Left lung (tissue), 14 donors: ENCODE measurements at regions of chr4 and their contacts with region 1.

Region 1: DNA sequence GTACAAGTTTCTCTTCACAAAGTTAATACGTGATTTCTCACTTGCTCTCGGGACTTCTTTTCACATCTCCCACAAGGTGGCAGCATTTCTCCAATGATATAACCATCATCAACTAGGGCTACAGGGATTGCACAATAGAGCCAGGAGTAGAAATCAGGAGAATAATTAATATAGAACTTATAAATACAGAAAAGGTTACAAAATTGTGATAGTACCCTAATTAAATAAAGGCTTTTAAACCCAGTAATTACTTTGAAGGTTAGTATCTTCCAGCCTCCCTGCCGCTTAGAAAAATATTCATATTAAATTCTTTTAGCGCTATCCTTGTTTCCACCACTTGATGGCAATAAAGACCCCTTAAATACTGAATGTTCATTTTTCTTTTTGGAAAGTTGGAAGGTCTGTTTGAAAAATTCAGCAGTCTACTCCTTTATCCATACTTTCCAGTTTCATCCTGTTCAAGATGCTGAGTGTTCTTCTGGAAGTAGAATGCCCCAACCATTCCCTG is 65.8 kb downstream of the RASGEF1B start:
- DNase-seq: peak in 2 of 4 donors; percentile 81 to 88
- ATAC-seq: peak; percentile 96
- H3K4me3 ChIP-seq: peak overlapping the region in 1 of 2 donors; percentile 8
- H3K27ac ChIP-seq: no peak overlapping the region
- H3K4me1 ChIP-seq: peaks cover 0 to 2% of the 10 kb centered on the region in 2 donors
- H3K27me3 ChIP-seq: no peaks in the 10 kb centered on the region
- CTCF ChIP-seq: peak; percentile 71 to 82

Region 2: DNA sequence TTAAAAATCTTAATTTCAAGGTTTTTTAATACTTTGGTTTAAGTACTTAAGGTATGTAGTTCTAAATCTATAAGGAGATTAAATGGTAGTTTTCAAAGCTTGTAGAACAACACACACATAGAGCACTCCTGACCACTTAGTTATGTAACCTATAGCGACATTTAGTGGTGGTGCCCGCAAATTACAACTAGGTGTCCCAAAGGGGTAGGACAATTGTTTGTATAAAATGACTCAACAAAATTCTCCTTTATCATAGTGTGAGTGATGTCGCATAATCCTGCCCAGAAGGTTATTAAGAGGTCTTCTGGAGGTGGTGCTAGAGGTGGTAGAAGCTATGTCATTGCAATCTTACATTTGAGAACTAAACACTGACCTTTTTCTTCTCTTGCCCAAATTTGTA is 438.8 kb after region 1 on chr4:
- intact Hi-C with region 1: loop called in 1 of 2 experiments (anchors 5 kb)
- DNase-seq: peak in 3 of 4 donors; percentile 51 to 78 (median 62)
- ATAC-seq: peak; percentile 99
- H3K4me3 ChIP-seq: no peak overlapping the region
- H3K27ac ChIP-seq: no peak overlapping the region
- H3K4me1 ChIP-seq: no peaks in the 10 kb centered on the region
- H3K27me3 ChIP-seq: no peaks in the 10 kb centered on the region
- CTCF ChIP-seq: peak; percentile 72 to 81

Region 3: DNA sequence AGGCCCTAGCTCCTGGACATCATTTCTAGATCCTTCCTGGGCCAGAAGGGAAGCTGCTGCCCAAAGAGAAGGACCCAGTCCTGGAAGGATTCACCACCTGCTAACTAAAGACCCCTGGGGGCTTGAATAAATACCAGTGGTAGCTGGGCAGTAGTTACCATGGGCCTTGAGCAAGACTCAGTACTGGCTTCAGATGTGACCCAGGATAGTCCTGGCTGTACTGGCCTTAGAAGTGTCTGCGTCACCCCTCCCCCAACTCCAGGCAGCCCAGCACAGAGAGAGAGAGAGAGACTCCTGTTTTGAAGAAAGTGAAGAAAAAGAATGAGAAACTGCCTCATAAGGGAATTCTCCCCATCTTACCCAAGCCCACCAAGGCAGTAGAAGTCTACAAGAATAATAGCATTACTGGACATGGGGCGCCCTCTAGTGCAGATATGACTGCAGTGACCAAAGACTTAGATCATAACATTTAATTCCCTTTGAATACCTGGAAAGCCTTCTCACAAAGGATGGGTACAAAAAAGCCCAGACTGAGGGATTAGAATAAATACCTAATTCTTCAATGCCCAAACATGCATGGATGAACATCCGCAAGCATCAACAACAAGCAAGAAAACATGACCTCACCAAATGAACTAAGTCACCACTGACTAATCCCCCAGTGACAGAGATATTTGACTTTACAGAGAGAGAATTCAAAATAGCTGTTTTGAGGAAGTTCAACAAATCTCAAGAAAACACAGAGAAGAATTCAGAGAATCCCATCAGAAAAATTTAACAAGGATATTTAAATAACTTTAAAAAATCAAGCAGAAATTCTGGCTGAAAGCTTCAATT is 796.1 kb after region 1 on chr4:
- intact Hi-C with region 1: loop called in 1 of 2 experiments (anchors 10 kb)
- DNase-seq: peak in 2 of 4 donors; percentile 14 to 30
- ATAC-seq: peak; percentile 92
- H3K4me3 ChIP-seq: no peak overlapping the region
- H3K27ac ChIP-seq: no peak overlapping the region
- H3K4me1 ChIP-seq: no peaks in the 10 kb centered on the region
- H3K27me3 ChIP-seq: no peaks in the 10 kb centered on the region
- CTCF ChIP-seq: peak; percentile 43 to 56